ENCODE measurements at regions of chr15 and their contacts with region 1.

Region 1: GRCh38 chr15:38809621-38810020 is 245.0 kb upstream of the RASGRP1 start:
- DNase-seq: no peak
- H3K4me3 ChIP-seq: no peak overlapping the region
- H3K27ac ChIP-seq: no peak overlapping the region
- H3K4me1 ChIP-seq: no peaks in the 10 kb centered on the region
- H3K27me3 ChIP-seq: peaks cover 14% of the 10 kb centered on the region
- CTCF ChIP-seq: no peak

Region 2: GRCh38 chr15:38745126-38745525 is 64.5 kb before region 1 on chr15:
- CTCF ChIA-PET with region 1: no interaction called
- POLR2A ChIA-PET with region 1: no interaction called
- intact Hi-C with region 1: loop called (anchors 10 kb)
- DNase-seq: no peak
- H3K4me3 ChIP-seq: no peak overlapping the region
- H3K27ac ChIP-seq: no peak overlapping the region
- H3K4me1 ChIP-seq: no peaks in the 10 kb centered on the region
- H3K27me3 ChIP-seq: peaks cover 20% of the 10 kb centered on the region
- CTCF ChIP-seq: no peak

Region 3: GRCh38 chr15:39188925-39189324 is 379.3 kb after region 1 on chr15:
- CTCF ChIA-PET with region 1: no interaction called
- POLR2A ChIA-PET with region 1: no interaction called
- intact Hi-C with region 1: no loop called
- DNase-seq: no peak
- H3K4me3 ChIP-seq: no peak overlapping the region
- H3K27ac ChIP-seq: no peak overlapping the region
- H3K4me1 ChIP-seq: no peaks in the 10 kb centered on the region
- H3K27me3 ChIP-seq: peaks cover 20% of the 10 kb centered on the region
- CTCF ChIP-seq: no peak

Measured in A673 (cell line).